Uterus (tissue), 4 donors: ENCODE measurements at regions of chr12 and their contacts with region 1.

Region 1: GRCh38 chr12:40152783-40153383 is 47.0 kb upstream of the SLC2A13 start:
- DNase-seq: peak; percentile 29 to 30
- H3K4me3 ChIP-seq: no peak overlapping the region
- H3K27ac ChIP-seq: no peak overlapping the region
- H3K4me1 ChIP-seq: no peaks in the 10 kb centered on the region
- H3K27me3 ChIP-seq: no peaks in the 10 kb centered on the region
- CTCF ChIP-seq: peak; percentile 35 to 73 (median 58)
- POLR2A ChIP-seq: no peak

Region 2: DNA sequence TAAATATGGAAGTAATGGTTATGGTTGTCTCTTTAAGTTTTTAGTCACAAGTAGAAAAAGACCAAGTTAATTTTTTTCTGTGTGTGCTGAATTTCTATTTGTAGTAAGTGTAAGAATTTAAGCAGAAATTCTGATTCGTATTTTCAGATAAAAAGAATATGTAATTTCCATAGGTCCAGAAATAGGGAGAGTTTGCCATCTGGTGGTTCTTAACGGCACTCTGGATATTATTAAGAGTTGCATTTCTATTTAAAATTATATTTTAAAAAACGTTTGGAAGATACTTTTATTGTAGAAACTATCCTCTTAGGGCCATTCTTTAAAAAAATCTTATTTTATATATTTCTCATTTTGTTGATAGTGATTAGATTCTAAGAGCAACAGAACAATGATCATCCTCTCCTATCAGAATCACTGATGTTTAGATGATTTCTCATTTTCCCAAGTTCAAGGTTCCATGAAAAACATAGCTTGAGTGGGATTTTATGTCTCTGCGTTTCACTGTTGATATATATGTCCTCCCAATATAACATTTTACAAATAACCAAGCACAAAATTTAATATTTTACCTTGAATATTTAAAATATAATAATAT is 160.2 kb after region 1 on chr12:
- intact Hi-C with region 1: loop called (anchors 10 kb)
- DNase-seq: no peak
- H3K4me3 ChIP-seq: no peak overlapping the region
- H3K27ac ChIP-seq: no peak overlapping the region
- H3K4me1 ChIP-seq: no peaks in the 10 kb centered on the region
- H3K27me3 ChIP-seq: no peaks in the 10 kb centered on the region
- CTCF ChIP-seq: peak in 2 of 4 experiments; percentile 23 to 40
- POLR2A ChIP-seq: no peak